ENCODE measurements at regions of chr4 and their contacts with region 1.

Region 1: GRCh38 chr4:37603070-37603468 is 83.1 kb downstream of the RELL1 start:
- DNase-seq: peak; percentile 26
- ATAC-seq: peak; percentile 97
- H3K4me3 ChIP-seq: no peak overlapping the region
- H3K27ac ChIP-seq: no peak overlapping the region
- H3K4me1 ChIP-seq: no peaks in the 10 kb centered on the region
- H3K27me3 ChIP-seq: no peaks in the 10 kb centered on the region
- CTCF ChIP-seq: peak; percentile 94 to 99 (median 98); a peak in 5 of 6 replicates
- EP300 ChIP-seq: no peak
- POLR2A ChIP-seq: no peak
- RAD21 ChIP-seq: peak; percentile 94

Region 2: DNA sequence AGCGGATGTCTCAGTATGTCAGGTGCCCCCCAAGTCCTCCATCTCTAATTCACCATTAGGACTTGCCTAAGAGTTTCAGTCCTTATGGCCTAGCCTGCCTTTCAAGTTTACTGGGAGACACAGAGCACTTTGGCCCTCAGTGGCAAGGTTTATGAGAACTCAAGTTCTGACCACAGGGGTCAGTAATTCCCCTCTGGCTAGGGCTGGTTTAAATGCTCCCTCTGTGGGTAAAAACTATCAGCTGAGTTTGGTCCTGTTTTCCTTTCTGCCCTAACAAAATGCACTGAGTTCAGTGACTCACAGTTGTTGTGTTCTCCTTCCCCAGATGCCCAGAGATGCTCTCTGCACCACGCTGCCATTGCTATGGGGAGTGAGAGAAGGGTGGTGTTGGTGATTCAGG is 80.1 kb before region 1 on chr4:
- CTCF ChIA-PET with region 1: no interaction called
- POLR2A ChIA-PET with region 1: no interaction called
- RAD21 ChIA-PET with region 1: no interaction called
- SMC1A ChIA-PET with region 1: no interaction called
- in situ Hi-C with region 1: no loop called
- intact Hi-C with region 1: no loop called
- DNase-seq: no peak
- ATAC-seq: no peak
- H3K4me3 ChIP-seq: no peak overlapping the region
- H3K27ac ChIP-seq: no peak overlapping the region
- H3K4me1 ChIP-seq: no peaks in the 10 kb centered on the region
- H3K27me3 ChIP-seq: no peaks in the 10 kb centered on the region
- CTCF ChIP-seq: no peak
- EP300 ChIP-seq: no peak
- POLR2A ChIP-seq: no peak
- RAD21 ChIP-seq: no peak

Region 3: DNA sequence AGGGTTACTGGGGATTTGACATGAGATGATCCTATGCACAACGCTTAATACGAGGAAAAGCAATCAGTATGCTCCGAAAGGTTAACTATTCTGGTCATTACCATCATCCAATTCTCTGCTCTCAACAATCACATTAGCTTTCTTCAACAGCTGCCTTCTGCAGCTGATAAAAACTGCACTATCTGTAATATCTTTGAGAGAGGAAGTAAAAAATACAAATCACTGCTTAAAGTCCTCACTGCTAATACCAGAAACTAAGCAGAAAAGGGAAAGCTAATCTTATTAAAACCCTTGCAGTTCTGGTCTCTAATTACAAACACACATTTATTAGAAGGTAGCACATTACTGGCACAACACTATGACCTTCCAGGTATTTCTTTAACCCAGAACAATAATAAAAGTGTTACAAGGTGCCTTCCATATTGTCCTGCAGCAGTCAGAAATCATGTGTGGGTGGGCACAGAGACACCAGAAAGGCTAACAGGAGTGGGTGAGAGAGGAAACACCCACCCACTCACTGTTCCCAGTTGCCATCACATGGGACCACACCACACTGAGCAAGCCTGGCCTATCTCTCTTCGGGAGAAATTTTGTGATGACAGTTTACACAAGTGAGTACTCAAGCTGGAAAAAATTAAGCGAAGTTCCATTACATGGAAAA is 12.1 kb after region 1 on chr4:
- CTCF ChIA-PET with region 1: interaction called, 35 read pairs
- POLR2A ChIA-PET with region 1: no interaction called
- RAD21 ChIA-PET with region 1: interaction called, 5 read pairs
- SMC1A ChIA-PET with region 1: interaction called, 3 read pairs
- in situ Hi-C with region 1: no loop called
- intact Hi-C with region 1: no loop called
- DNase-seq: no peak
- ATAC-seq: no peak
- H3K4me3 ChIP-seq: no peak overlapping the region
- H3K27ac ChIP-seq: no peak overlapping the region
- H3K4me1 ChIP-seq: no peaks in the 10 kb centered on the region
- H3K27me3 ChIP-seq: no peaks in the 10 kb centered on the region
- CTCF ChIP-seq: no peak
- EP300 ChIP-seq: no peak
- POLR2A ChIP-seq: no peak
- RAD21 ChIP-seq: no peak

Region 4: GRCh38 chr4:37675587-37676290 is 72.7 kb after region 1 on chr4:
- CTCF ChIA-PET with region 1: interaction called, 10 read pairs
- POLR2A ChIA-PET with region 1: interaction called, 3 read pairs
- RAD21 ChIA-PET with region 1: interaction called, 3 read pairs
- SMC1A ChIA-PET with region 1: interaction called, 7 read pairs
- in situ Hi-C with region 1: no loop called
- intact Hi-C with region 1: no loop called
- DNase-seq: peak; percentile 85
- ATAC-seq: peak; percentile 85
- H3K4me3 ChIP-seq: peak overlapping the region; percentile 33; the same call in 1 of the 2 replicates
- H3K27ac ChIP-seq: peak overlapping the region; percentile 87
- H3K4me1 ChIP-seq: peaks cover 26% of the 10 kb centered on the region
- H3K27me3 ChIP-seq: no peaks in the 10 kb centered on the region
- CTCF ChIP-seq: no peak
- EP300 ChIP-seq: peak in 1 of 2 experiments; percentile 93; a peak in 3 of 4 replicates
- POLR2A ChIP-seq: no peak
- RAD21 ChIP-seq: 0 out of 2 replicates have a peak, but pooled peaks have one; percentile 5

Region 5: GRCh38 chr4:37686373-37687193 is 83.5 kb after region 1 on chr4 and contains the start of gene RELL1:
- CTCF ChIA-PET with region 1: interaction called, 6 read pairs
- POLR2A ChIA-PET with region 1: no interaction called
- RAD21 ChIA-PET with region 1: interaction called, 6 read pairs
- SMC1A ChIA-PET with region 1: interaction called, 10 read pairs
- in situ Hi-C with region 1: no loop called
- intact Hi-C with region 1: loop called (anchors 2 kb)
- DNase-seq: peak; percentile 97
- ATAC-seq: peak; percentile 89
- H3K4me3 ChIP-seq: peak within 1 kb of the TSS; percentile 87
- H3K27ac ChIP-seq: peak within 1 kb of the TSS; percentile 67
- H3K4me1 ChIP-seq: peaks cover 11% of the 10 kb centered on the region
- H3K27me3 ChIP-seq: no peaks in the 10 kb centered on the region
- CTCF ChIP-seq: no peak
- EP300 ChIP-seq: no peak
- POLR2A ChIP-seq: no peak
- RAD21 ChIP-seq: no peak
- polyA plus RNA-seq, gene RELL1: 0.20 to 0.26 TPM

Region 6: GRCh38 chr4:37793562-37793961 is 190.5 kb after region 1 on chr4:
- CTCF ChIA-PET with region 1: interaction called, 103 read pairs
- POLR2A ChIA-PET with region 1: no interaction called
- RAD21 ChIA-PET with region 1: interaction called, 57 read pairs
- SMC1A ChIA-PET with region 1: interaction called, 12 read pairs
- in situ Hi-C with region 1: loop called (anchors 5 kb)
- intact Hi-C with region 1: loop called (anchors 1 kb)
- DNase-seq: no peak
- ATAC-seq: peak; percentile 79
- H3K4me3 ChIP-seq: no peak overlapping the region
- H3K27ac ChIP-seq: no peak overlapping the region
- H3K4me1 ChIP-seq: no peaks in the 10 kb centered on the region
- H3K27me3 ChIP-seq: no peaks in the 10 kb centered on the region
- CTCF ChIP-seq: peak; percentile 58 to 59 (median 59); a peak in 5 of 6 replicates
- EP300 ChIP-seq: no peak
- POLR2A ChIP-seq: no peak
- RAD21 ChIP-seq: peak; percentile 87

Region 7: DNA sequence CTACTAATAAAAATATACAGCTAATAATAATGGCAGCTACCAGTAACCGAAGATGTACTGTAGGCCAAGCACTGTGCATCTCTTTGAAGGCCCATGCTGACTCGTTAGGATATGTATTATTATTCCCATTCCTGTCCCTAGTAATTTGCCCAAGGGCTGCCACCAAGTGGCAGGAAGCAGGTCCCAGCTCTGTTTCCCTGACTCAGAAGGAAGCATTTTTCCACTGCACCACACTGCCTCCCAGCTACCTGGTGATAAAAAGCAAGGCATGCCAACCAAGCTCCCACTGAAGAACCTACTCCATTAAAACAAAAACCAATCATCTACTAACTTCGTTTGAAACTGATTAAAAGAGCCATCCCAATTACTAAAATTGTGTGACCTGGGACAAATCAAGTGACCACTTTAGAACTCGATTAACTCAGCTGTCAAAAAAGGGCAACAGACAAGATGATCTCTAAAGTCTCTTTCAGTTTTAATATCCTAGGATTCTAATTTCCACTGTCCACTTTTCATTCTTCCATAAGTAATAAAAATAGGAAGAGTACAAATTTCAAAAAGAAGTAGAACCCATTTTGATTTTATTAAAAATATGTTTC is 199.1 kb after region 1 on chr4:
- CTCF ChIA-PET with region 1: interaction called, 103 read pairs
- POLR2A ChIA-PET with region 1: no interaction called
- RAD21 ChIA-PET with region 1: interaction called, 57 read pairs
- SMC1A ChIA-PET with region 1: interaction called, 43 read pairs
- in situ Hi-C with region 1: loop called (anchors 5 kb)
- intact Hi-C with region 1: loop called (anchors 1 kb)
- DNase-seq: no peak
- ATAC-seq: no peak; the same call in 2 of the 3 replicates
- H3K4me3 ChIP-seq: no peak overlapping the region
- H3K27ac ChIP-seq: no peak overlapping the region
- H3K4me1 ChIP-seq: no peaks in the 10 kb centered on the region
- H3K27me3 ChIP-seq: no peaks in the 10 kb centered on the region; a peak in 1 of 4 replicates
- CTCF ChIP-seq: peak; percentile 12 to 41 (median 24); a peak in 4 of 6 replicates
- EP300 ChIP-seq: no peak
- POLR2A ChIP-seq: no peak
- RAD21 ChIP-seq: peak; percentile 44

Region 8: DNA sequence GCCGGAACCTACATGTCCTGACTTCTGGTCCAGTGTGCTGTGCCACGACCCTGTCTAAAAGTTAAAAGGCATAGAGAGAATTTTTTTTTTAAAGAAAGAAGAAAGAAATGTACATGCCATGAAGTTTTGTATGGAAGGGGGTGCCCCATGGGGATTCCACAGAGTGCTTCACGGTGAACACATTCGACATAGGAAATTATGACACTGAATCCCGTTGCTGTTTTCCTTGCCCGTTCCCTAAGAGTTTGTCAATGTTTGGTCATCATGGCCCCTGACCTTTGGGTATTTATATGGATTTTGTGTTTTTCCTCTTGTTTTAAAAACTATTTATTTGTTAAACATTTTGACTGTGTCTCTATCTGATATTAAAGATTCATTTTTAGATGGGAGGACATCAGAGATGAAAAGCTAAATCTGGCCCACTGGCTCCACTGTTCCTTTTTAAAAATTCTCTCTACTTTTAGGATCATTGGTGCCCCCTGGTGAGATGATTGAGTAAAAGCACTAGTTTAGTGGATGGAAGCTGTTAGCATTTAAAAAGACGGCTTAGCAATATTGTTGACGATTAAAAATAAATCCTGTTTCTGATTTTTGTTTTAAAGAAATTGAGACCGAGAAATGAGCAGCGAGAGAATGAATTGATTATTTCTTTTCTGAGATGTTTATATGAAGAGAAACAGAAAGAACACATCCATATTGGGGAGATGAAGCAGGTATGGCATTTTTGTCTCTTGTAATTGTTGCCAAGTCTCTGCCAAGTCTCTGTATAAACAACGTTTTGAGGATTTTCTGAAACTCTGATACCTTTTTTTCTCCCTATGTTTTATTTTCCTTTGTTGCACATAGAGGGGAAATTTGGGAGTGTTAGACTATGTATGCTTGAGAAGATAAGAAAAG is 432.2 kb after region 1 on chr4:
- CTCF ChIA-PET with region 1: interaction called, 34 read pairs
- POLR2A ChIA-PET with region 1: no interaction called
- RAD21 ChIA-PET with region 1: interaction called, 19 read pairs
- SMC1A ChIA-PET with region 1: interaction called, 12 read pairs
- in situ Hi-C with region 1: loop called (anchors 5 kb)
- intact Hi-C with region 1: loop called (anchors 1 kb)
- DNase-seq: no peak
- ATAC-seq: peak; percentile 74
- H3K4me3 ChIP-seq: no peak overlapping the region
- H3K27ac ChIP-seq: no peak overlapping the region
- H3K4me1 ChIP-seq: no peaks in the 10 kb centered on the region
- H3K27me3 ChIP-seq: no peaks in the 10 kb centered on the region
- CTCF ChIP-seq: peak; percentile 44 to 75 (median 64); a peak in 5 of 6 replicates
- EP300 ChIP-seq: no peak
- POLR2A ChIP-seq: no peak
- RAD21 ChIP-seq: peak; percentile 89

Measured in GM12878 (cell line).